ENCODE measurements at regions of chr19 and their contacts with region 1.

Region 1: DNA sequence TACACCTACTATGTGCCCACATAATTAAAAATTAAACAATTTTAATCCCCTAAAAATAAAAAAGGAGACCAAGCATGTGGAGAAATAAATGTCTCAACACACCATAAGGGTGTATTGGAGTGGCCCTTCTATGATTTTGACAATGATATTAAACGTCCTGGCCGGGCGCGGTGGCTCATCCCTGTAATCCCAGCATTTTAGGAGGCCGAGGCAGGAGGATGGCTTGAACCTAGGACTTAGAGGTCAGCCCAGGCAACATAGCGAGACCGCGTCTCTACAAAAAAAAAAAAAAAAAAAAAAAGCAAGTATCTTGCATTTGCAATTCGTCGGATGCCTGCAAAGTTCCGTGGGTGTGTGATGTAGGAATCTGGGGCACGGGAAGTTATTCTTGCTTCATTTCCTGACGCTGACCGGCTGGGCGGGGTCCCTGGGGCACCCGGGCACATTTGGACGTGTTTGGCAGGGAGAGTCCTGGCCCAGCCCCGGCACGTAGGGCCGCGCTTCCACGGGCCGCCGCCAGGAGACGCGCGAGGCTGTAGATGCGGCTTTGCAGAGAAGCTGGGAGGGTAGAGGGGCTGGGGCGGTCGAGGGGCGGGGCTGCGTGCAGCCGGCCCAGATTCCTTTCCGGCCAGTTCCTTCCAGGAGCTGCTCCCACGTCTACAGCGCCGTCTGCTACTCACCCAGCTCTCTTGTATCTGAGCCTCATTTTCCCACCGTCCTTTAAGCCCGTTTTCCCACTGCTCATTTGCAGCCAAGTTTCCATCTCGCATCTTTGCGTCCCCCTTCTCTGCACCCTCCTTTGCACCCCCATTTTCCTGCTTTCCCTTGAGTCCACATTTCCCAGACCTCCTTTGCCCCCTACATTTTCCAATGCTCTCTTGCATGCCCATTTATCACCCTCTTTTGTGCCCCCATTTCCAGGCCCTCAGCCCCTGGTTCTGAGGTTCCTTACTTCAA is 2.2 kb upstream of the TSPAN16 start:
- DNase-seq: peak; percentile 95
- ATAC-seq: peak; percentile 93 to 96 (median 94)
- H3K4me3 ChIP-seq: peak overlapping the region; percentile 34
- H3K27ac ChIP-seq: peak overlapping the region; percentile 21
- H3K4me1 ChIP-seq: no peaks in the 10 kb centered on the region
- H3K27me3 ChIP-seq: peaks cover 0 to 40% (median 1%) of the 10 kb centered on the region in 3 donors
- CTCF ChIP-seq: peak; percentile 90

Region 2: GRCh38 chr19:11125994-11126685 is 167.6 kb before region 1 on chr19:
- intact Hi-C with region 1: loop called in 1 of 2 experiments (anchors 5 kb)
- DNase-seq: peak; percentile 78 to 85
- ATAC-seq: peak; percentile 59 to 85 (median 68)
- H3K4me3 ChIP-seq: no peak overlapping the region
- H3K27ac ChIP-seq: no peak overlapping the region
- H3K4me1 ChIP-seq: no peaks in the 10 kb centered on the region
- H3K27me3 ChIP-seq: no peaks in the 10 kb centered on the region
- CTCF ChIP-seq: peak; percentile 67

Region 3: GRCh38 chr19:11364935-11365334 is 71.2 kb after region 1 on chr19:
- intact Hi-C with region 1: no loop called
- DNase-seq: no peak
- ATAC-seq: no peak
- H3K4me3 ChIP-seq: no peak overlapping the region
- H3K27ac ChIP-seq: no peak overlapping the region
- H3K4me1 ChIP-seq: no peaks in the 10 kb centered on the region
- H3K27me3 ChIP-seq: no peaks in the 10 kb centered on the region
- CTCF ChIP-seq: no peak

Region 4: DNA sequence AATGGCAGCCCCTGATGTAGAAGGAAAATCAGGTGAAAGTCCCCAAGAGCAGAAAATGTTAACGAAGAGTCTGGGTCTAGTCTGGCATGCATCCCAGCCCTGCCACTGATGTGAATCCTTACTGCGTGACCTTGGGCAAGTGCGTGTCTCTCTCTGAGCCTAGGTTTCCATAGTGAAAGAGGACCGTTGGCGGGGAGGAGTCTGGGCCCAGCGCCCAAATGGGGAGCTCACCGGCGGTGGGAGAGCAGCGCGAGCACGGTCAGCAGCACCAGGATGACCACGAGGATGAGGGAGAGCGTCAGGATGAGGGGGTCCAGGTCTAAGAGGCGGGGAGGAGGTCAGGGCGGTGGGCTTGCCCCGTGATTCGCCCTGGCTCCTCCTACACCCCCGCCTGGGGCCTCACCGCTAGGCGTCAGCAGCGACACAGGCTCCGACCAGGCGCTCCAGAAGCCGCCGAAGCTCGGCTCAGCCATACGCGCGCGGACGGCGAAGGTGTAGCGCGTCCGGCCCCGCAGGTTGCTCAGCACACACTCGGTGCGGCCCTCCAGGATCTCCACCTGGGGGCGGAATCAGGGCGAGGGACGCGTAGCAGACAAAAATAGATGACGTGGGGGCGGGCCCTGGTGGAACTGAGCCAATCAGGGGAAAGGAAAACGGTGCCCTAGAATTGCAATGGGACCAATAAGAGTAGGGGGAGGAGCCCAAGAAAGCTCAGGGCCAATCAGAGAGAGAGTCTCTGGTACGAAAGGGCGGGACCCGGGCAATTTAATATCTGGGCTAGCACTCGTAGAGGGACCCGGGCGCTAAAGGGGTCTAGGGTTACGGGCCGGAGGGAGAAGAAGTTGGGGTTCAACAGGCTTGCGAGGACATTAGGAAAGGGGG is 87.2 kb after region 1 on chr19:
- intact Hi-C with region 1: no loop called
- DNase-seq: peak; percentile 95 to 97
- ATAC-seq: peak; percentile 94 to 97 (median 96)
- H3K4me3 ChIP-seq: peak overlapping the region; percentile 74
- H3K27ac ChIP-seq: peak overlapping the region; percentile 70
- H3K4me1 ChIP-seq: peaks cover 39% of the 10 kb centered on the region
- H3K27me3 ChIP-seq: peaks cover 0 to 24% (median 8%) of the 10 kb centered on the region in 3 donors
- CTCF ChIP-seq: peak; percentile 65

Region 5: GRCh38 chr19:11446652-11447301 is 153.1 kb after region 1 on chr19:
- intact Hi-C with region 1: loop called in 1 of 2 experiments (anchors 5 kb)
- DNase-seq: peak; percentile 58 to 80
- ATAC-seq: peak; percentile 61 to 79 (median 68)
- H3K4me3 ChIP-seq: no peak overlapping the region
- H3K27ac ChIP-seq: no peak overlapping the region
- H3K4me1 ChIP-seq: no peaks in the 10 kb centered on the region
- H3K27me3 ChIP-seq: no peaks in the 10 kb centered on the region
- CTCF ChIP-seq: peak; percentile 61

Region 6: GRCh38 chr19:11482384-11483050 is 188.8 kb after region 1 on chr19:
- intact Hi-C with region 1: loop called in 1 of 2 experiments (anchors 5 kb)
- DNase-seq: peak; percentile 84 to 92
- ATAC-seq: peak; percentile 85 to 93 (median 87)
- H3K4me3 ChIP-seq: peak overlapping the region; percentile 57
- H3K27ac ChIP-seq: no peak overlapping the region
- H3K4me1 ChIP-seq: peaks cover 14% of the 10 kb centered on the region
- H3K27me3 ChIP-seq: peaks cover 0 to 62% (median 19%) of the 10 kb centered on the region in 3 donors
- CTCF ChIP-seq: peak; percentile 87

Region 7: DNA sequence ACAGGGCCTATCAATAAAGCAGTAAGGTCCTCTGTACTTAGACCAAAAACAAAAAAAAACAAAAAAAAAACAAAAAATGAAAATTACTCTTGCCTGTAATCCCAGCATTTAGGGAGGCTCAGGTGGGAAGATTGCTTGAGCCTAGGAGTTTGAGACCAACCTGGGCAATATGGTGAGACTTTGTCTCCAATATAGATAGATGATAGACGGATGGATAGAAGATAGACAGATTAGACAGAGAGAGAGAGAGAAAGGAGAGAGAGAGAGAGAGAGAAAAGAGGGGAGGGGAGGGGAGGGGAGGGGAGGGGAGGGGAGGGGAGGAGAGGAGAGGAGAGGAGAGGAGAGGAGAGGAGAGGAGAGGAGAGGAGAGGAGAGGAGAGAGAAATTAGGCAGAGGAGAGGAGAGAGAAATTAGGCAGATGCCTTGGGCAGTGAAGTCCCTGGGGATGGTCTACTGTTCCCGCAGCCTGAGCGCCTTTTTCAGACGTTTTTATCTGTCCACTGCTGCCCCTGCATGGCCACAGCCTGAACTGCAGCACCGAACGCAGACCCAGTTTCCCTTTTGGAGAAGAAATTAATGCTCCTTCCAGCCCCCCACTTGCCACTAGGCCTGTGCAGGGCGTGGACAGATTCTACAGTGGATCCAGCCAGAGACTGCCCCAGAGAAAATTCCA is 293.7 kb after region 1 on chr19:
- intact Hi-C with region 1: loop called (anchors 2 to 10 kb)
- DNase-seq: peak; percentile 74 to 81
- ATAC-seq: peak; percentile 85 to 92 (median 90)
- H3K4me3 ChIP-seq: no peak overlapping the region
- H3K27ac ChIP-seq: no peak overlapping the region
- H3K4me1 ChIP-seq: no peaks in the 10 kb centered on the region
- H3K27me3 ChIP-seq: no peaks in the 10 kb centered on the region
- CTCF ChIP-seq: peak; percentile 88

Measured in psoas muscle (tissue), 8 donors.